ENCODE measurements at regions of chr9 and their contacts with region 1.

Region 1: DNA sequence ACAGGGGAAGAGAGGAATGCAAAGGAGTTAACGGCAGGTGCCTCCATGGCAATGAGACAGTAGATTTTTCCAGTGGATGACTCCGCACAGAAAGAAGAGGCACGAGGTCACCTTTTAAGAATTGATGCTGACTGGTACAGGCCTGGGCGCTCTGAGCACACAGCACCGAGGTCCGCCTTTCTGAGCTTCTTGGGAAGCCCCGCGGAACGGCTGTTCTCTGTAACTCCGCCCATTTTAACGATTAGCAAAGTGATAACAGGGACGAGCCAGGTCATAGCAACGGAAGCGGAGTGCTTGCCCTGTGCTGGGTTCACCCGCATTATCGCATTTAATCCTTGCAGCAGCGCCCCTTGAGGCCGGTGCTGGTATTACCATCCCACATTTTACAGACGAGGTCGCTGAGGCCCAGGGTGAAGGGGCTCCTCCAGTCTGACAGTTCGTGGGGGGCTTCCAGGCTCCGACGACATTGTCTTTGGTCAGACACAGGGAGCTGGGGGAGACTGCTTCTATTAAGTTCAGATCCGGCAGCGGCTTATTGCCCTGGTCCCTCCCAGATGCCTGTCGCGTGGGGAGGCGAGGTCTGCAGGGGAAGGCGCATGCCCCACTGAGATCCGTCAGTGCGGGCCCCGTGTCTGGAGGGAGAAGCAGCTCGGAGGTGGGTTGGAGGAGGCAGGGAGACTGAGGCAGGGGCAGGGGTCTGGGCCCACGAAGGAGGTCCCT is 22.4 kb upstream of the HMCN2 start:
- DNase-seq: peak; percentile 47 to 87 (median 74)
- ATAC-seq: peak; percentile 81 to 91 (median 82)
- H3K4me3 ChIP-seq: peak overlapping the region in 1 of 2 donors; percentile 2
- H3K4me3 Mint-ChIP-seq: peak overlapping the region; percentile 38 to 69 (median 60)
- H3K27ac ChIP-seq: no peak overlapping the region
- H3K27ac Mint-ChIP-seq: peak overlapping the region; percentile 54 to 55
- H3K4me1 ChIP-seq: peaks cover 3 to 33% of the 10 kb centered on the region in 2 experiments
- H3K4me1 Mint-ChIP-seq: peaks cover 17 to 31% (median 26%) of the 10 kb centered on the region in 3 donors
- H3K27me3 ChIP-seq: peaks cover 0 to 11% of the 10 kb centered on the region in 2 experiments
- H3K27me3 Mint-ChIP-seq: no peaks in the 10 kb centered on the region

Region 2: GRCh38 chr9:129080602-129081387 is 1162.4 kb before region 1 on chr9 and contains the start of gene DOLPP1:
- CTCF ChIA-PET with region 1: no interaction called
- POLR2A ChIA-PET with region 1: interaction called in 1 of 2 experiments, 10 read pairs
- DNase-seq: peak; percentile 97 to 100 (median 99)
- ATAC-seq: peak; percentile 92 to 96 (median 95)
- H3K4me3 ChIP-seq: peak within 1 kb of the TSS; percentile 71 to 88
- H3K4me3 Mint-ChIP-seq: peak within 1 kb of the TSS; percentile 85 to 94 (median 88)
- H3K27ac ChIP-seq: peak within 1 kb of the TSS; percentile 68
- H3K27ac Mint-ChIP-seq: peak within 1 kb of the TSS; percentile 72 to 83
- H3K4me1 ChIP-seq: peaks cover 11 to 42% of the 10 kb centered on the region in 2 experiments
- H3K4me1 Mint-ChIP-seq: peaks cover 18 to 34% (median 31%) of the 10 kb centered on the region in 3 donors
- H3K27me3 ChIP-seq: no peaks in the 10 kb centered on the region
- H3K27me3 Mint-ChIP-seq: no peaks in the 10 kb centered on the region
- total RNA-seq, gene DOLPP1: 5.1 to 14.4 (median 11.8) TPM

Region 3: DNA sequence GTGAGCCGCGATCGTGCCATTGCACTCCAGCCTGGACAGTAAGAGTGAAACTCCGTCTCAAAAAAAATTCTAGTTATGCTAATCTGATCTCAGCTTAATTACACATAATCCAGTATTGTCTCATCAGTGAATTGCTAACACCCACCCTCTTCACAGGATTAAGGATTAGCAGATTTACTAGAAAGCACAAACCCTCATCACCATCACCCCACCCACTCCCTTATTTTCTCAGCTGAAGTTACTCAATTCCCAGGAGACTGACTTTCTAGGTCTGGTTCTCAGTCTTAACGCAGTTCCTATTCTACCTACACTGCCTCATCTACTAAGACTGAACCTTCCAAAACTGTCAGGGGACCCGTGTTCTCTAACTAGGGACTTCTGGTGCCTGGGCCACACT is 431.2 kb before region 1 on chr9:
- CTCF ChIA-PET with region 1: interaction called in 1 of 2 experiments, 10 read pairs
- POLR2A ChIA-PET with region 1: no interaction called
- DNase-seq: no peak
- ATAC-seq: no peak
- H3K4me3 ChIP-seq: no peak overlapping the region
- H3K4me3 Mint-ChIP-seq: no peak overlapping the region
- H3K27ac ChIP-seq: no peak overlapping the region
- H3K27ac Mint-ChIP-seq: no peak overlapping the region
- H3K4me1 ChIP-seq: peaks cover 0 to 9% of the 10 kb centered on the region in 2 experiments
- H3K4me1 Mint-ChIP-seq: peaks cover 18 to 29% (median 19%) of the 10 kb centered on the region in 3 donors
- H3K27me3 ChIP-seq: no peaks in the 10 kb centered on the region
- H3K27me3 Mint-ChIP-seq: no peaks in the 10 kb centered on the region

Region 4: GRCh38 chr9:130290291-130291181 is 47.4 kb after region 1 on chr9:
- CTCF ChIA-PET with region 1: no interaction called
- POLR2A ChIA-PET with region 1: no interaction called
- DNase-seq: no peak
- ATAC-seq: no peak
- H3K4me3 ChIP-seq: no peak overlapping the region
- H3K4me3 Mint-ChIP-seq: no peak overlapping the region
- H3K27ac ChIP-seq: no peak overlapping the region
- H3K27ac Mint-ChIP-seq: peak overlapping the region in 1 of 2 donors; percentile 61
- H3K4me1 ChIP-seq: no peaks in the 10 kb centered on the region
- H3K4me1 Mint-ChIP-seq: no peaks in the 10 kb centered on the region
- H3K27me3 ChIP-seq: peaks cover 0 to 66% of the 10 kb centered on the region in 2 experiments
- H3K27me3 Mint-ChIP-seq: peaks cover 32 to 67% of the 10 kb centered on the region in 2 donors

Region 5: DNA sequence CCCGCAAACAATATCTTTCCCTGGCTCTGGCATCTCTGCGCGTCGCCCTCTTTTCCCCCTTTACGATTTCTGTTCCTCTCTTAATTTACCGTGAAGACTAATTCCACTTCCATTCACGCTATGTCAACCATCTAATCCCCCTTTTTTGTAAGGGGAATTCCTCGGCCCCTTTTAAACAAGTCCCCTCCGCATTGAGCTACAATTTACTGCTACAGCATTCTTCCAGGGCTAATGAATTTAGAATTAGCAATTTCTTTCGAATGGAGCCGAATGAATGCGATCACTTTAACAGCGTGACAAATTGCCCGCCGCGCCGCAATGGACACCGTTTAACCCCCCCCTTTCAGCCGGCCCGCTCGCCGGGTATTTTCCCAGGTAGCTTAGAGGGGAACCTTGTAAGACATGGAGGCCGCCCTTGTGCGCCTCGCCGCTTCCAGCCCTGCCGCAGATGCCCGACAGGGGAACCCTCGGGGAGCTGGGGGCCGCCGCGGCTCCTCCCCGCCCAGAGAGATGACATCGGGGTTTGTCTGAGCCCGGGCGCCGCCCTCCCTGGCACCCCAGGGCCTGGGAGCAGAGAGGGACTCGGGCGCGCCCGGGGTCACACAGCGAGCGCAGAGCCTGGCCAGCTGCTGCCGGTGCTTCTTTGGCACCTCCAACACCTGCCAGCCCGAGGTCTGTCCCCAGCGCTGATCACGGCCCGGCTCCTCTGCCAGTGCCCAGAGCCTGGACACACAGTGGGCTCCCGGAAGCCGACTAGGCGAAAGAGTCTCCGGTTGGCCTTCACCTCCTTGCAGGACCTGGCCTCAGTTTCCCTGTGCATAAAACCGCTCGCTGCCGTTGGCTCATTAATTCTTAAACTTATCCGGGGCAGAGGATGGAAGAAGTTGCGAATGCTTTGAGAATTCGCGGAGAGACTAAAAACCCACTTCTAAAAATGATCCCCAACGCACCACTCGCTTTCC is 422.5 kb after region 1 on chr9:
- CTCF ChIA-PET with region 1: no interaction called
- POLR2A ChIA-PET with region 1: interaction called in 1 of 2 experiments, 14 read pairs
- DNase-seq: no peak
- ATAC-seq: no peak
- H3K4me3 ChIP-seq: no peak overlapping the region
- H3K4me3 Mint-ChIP-seq: peak overlapping the region in 2 of 3 donors; percentile 54 to 85
- H3K27ac ChIP-seq: no peak overlapping the region
- H3K27ac Mint-ChIP-seq: peak overlapping the region in 1 of 2 donors; percentile 41
- H3K4me1 ChIP-seq: peaks cover 2 to 56% of the 10 kb centered on the region in 2 experiments
- H3K4me1 Mint-ChIP-seq: peaks cover 20 to 32% (median 31%) of the 10 kb centered on the region in 3 donors
- H3K27me3 ChIP-seq: peaks cover 13 to 87% of the 10 kb centered on the region in 2 experiments
- H3K27me3 Mint-ChIP-seq: peaks cover 35 to 71% of the 10 kb centered on the region in 2 donors

Measured in T-cell (primary cell).